Heart right ventricle (tissue), 16 donors: ENCODE measurements at regions of chr18 and their contacts with region 1.

Region 1: GRCh38 chr18:11733031-11733430 is 44.0 kb downstream of the GNAL start:
- DNase-seq: peak; percentile 65 to 82
- ATAC-seq: peak; percentile 80 to 96 (median 92)
- H3K4me3 ChIP-seq: peak overlapping the region in 6 of 10 donors; percentile 28 to 37 (median 30)
- H3K27ac ChIP-seq: no peak overlapping the region
- H3K4me1 ChIP-seq: peaks cover 0 to 7% (median 0%) of the 10 kb centered on the region in 9 donors
- H3K27me3 ChIP-seq: peaks cover 3 to 48% (median 26%) of the 10 kb centered on the region in 7 donors
- CTCF ChIP-seq: peak; percentile 80 to 95 (median 92)

Region 2: GRCh38 chr18:11808001-11808855 is 75.2 kb after region 1 on chr18:
- intact Hi-C with region 1: loop called in 1 of 10 experiments (anchors 10 kb)
- DNase-seq: no peak
- ATAC-seq: no peak
- H3K4me3 ChIP-seq: no peak overlapping the region
- H3K27ac ChIP-seq: no peak overlapping the region
- H3K4me1 ChIP-seq: peaks cover 0 to 5% (median 0%) of the 10 kb centered on the region in 9 donors
- H3K27me3 ChIP-seq: no peaks in the 10 kb centered on the region
- CTCF ChIP-seq: no peak

Region 3: GRCh38 chr18:11857177-11857887 is 124.3 kb after region 1 on chr18:
- intact Hi-C with region 1: loop called in 1 of 10 experiments (anchors 5 kb)
- DNase-seq: peak; percentile 34 to 51
- ATAC-seq: peak; percentile 44 to 96 (median 80)
- H3K4me3 ChIP-seq: peak overlapping the region in 3 of 10 donors; percentile 13 to 16 (median 14)
- H3K27ac ChIP-seq: peak overlapping the region in 9 of 10 donors; percentile 9 to 83 (median 72)
- H3K4me1 ChIP-seq: peaks cover 0 to 73% (median 24%) of the 10 kb centered on the region in 9 donors
- H3K27me3 ChIP-seq: no peaks in the 10 kb centered on the region
- CTCF ChIP-seq: no peak

Region 4: DNA sequence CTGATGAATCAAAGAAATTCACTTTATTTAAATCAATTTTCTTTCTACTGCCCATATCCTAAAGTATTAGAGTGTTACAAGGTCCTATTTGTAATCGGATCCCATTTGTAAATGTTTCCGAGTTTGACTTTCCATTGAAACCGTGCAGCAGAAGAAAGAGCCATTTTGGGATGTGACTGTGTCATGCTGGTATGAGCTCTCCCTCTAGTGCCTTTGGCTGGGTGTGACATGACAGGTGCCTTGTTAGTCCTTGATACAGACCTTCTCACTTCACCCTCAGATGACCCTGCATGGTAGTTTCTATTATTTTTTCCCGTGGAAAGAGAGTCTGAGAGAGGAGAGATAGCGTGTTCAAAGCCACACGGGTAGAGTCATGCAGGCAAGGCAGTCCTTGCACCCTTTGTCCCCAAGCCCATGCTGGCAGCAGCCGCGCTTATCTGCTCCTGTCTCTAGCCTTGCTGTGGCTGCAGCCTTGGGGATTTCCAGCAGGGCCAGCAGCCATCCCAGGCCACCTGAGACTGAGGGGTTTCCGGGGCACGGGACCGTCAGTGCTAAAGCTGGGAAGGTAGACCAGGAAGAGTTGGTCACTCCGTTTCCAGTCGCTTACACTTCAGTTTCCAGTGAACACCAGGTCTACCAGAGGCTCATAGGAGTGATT is 139.6 kb after region 1 on chr18:
- intact Hi-C with region 1: loop called (anchors 1 to 5 kb)
- DNase-seq: peak in 1 of 2 donors; percentile 41
- ATAC-seq: peak; percentile 82 to 97 (median 92)
- H3K4me3 ChIP-seq: no peak overlapping the region
- H3K27ac ChIP-seq: peak overlapping the region in 5 of 10 donors; percentile 12 to 65 (median 27)
- H3K4me1 ChIP-seq: peaks cover 0 to 4% (median 0%) of the 10 kb centered on the region in 9 donors
- H3K27me3 ChIP-seq: no peaks in the 10 kb centered on the region
- CTCF ChIP-seq: peak in 8 of 9 donors; percentile 18 to 63 (median 55)

Region 5: GRCh38 chr18:11995445-11996189 is 262.6 kb after region 1 on chr18:
- intact Hi-C with region 1: loop called in 4 of 10 experiments (anchors 5 to 10 kb)
- DNase-seq: peak; percentile 76 to 80
- ATAC-seq: peak; percentile 79 to 93 (median 88)
- H3K4me3 ChIP-seq: peak overlapping the region in 2 of 10 donors; percentile 5 to 7
- H3K27ac ChIP-seq: peak overlapping the region in 9 of 10 donors; percentile 20 to 77 (median 65)
- H3K4me1 ChIP-seq: peaks cover 6 to 56% (median 28%) of the 10 kb centered on the region in 9 donors
- H3K27me3 ChIP-seq: no peaks in the 10 kb centered on the region
- CTCF ChIP-seq: peak; percentile 67 to 90 (median 85)